PC-9 (cell line): ENCODE measurements at regions of chr7 and their contacts with region 1.

Region 1: DNA sequence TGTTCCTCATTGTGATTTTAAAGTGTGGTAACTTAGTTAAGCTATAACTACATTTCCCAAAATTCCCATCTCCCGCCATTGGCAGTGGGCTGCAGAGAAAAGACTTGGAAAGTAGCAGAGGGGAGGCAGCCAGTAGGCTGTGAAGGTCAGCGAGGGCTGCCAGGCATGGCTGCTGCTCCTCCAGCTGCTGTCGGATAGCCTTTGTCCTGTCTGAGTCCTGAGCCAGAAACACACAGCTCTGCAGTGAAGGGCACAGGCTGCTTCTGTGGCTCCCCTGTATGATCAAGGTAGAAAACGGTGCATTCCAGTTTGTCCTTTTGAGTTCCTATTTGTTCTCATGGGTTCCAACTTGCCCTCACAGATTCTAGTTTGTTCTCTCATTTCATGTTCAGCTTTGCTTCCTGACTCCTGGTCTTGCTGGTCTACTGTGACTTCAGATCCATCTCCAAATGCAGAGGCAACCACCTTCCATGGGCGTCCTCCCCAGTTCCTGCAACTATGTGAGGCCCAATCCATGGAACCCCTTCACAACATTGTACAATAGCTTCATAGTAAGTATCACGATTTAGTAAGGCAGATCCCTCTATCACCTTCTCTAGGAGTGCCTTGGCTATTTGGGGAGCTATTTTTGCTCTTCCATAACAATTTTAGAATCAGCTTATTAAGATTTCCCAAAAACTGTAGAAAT is 31.7 kb downstream of the SYPL1 start:
- DNase-seq: no peak
- H3K4me3 ChIP-seq: no peak overlapping the region
- H3K27ac ChIP-seq: no peak overlapping the region
- H3K4me1 ChIP-seq: 0 out of 2 replicates have a peak, but pooled peaks cover 3% of the 10 kb centered on the region
- H3K27me3 ChIP-seq: no peaks in the 10 kb centered on the region
- CTCF ChIP-seq: no peak

Region 2: DNA sequence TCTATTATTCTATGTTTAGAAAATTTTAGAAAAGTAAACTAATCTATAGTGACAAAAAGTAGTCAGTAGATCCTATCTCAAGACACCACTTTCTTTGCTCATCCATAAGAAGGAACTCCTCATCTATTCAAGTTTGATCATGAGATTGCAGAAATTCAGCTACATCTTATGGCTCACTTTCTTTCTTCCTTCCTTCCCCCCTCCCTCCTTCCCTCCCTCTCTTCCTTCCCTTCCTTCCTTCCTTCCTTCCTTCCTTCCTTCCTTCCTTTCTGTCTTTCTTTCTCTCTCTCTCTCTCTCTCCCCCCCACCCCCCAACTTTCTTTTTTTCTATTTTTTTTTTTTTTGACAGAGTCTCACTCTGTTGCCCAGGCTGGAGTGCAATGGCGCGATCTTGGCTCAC is 656.5 kb before region 1 on chr7:
- CTCF ChIA-PET with region 1: no interaction called
- POLR2A ChIA-PET with region 1: interaction called, 14 read pairs
- intact Hi-C with region 1: no loop called
- DNase-seq: no peak
- H3K4me3 ChIP-seq: no peak overlapping the region
- H3K27ac ChIP-seq: no peak overlapping the region
- H3K4me1 ChIP-seq: no peaks in the 10 kb centered on the region
- H3K27me3 ChIP-seq: no peaks in the 10 kb centered on the region
- CTCF ChIP-seq: no peak

Region 3: GRCh38 chr7:105906695-105907094 is 173.7 kb before region 1 on chr7:
- CTCF ChIA-PET with region 1: no interaction called
- POLR2A ChIA-PET with region 1: no interaction called
- intact Hi-C with region 1: no loop called
- DNase-seq: no peak
- H3K4me3 ChIP-seq: no peak overlapping the region
- H3K27ac ChIP-seq: no peak overlapping the region
- H3K4me1 ChIP-seq: no peaks in the 10 kb centered on the region
- H3K27me3 ChIP-seq: no peaks in the 10 kb centered on the region
- CTCF ChIP-seq: no peak

Region 4: DNA sequence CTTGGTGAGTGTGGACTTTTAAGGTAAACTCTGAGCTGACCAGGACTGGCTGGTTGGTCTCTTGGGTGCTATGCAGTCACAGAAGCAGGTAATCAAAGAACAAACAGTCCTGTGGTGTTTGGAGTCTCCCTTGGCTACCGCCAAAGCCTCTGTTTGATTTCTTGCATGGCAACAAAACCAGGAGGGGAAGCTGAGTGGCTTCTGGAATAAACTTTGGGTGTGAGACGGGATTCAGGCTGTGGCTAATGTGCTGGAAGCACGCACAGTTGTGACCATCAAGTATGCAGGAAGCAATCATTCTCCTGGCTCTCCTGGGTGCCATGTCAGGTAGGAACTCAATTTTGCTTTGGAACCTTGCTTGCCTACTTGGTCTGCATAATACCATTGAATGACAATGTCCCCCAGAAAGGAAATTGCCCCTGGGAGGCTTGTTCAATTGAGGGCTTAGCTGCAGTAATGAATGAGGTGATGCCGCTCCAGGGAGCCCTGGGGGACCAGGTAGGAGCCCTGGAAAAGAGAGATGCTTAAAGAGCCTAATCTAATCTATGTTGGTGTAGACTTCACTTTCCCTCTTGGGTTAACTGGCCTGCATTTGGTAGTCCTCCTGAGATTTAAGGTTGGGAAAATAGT is 117.3 kb before region 1 on chr7 and contains the start of gene CDHR3:
- CTCF ChIA-PET with region 1: interaction called, 12 read pairs
- POLR2A ChIA-PET with region 1: no interaction called
- intact Hi-C with region 1: no loop called
- DNase-seq: no peak
- H3K4me3 ChIP-seq: no peak within 1 kb of the TSS
- H3K27ac ChIP-seq: no peak within 1 kb of the TSS
- H3K4me1 ChIP-seq: no peaks in the 10 kb centered on the region
- H3K27me3 ChIP-seq: no peaks in the 10 kb centered on the region
- CTCF ChIP-seq: no peak
- total RNA-seq, gene CDHR3: 8.7 and 12.1 TPM in 2 replicates

Region 5: DNA sequence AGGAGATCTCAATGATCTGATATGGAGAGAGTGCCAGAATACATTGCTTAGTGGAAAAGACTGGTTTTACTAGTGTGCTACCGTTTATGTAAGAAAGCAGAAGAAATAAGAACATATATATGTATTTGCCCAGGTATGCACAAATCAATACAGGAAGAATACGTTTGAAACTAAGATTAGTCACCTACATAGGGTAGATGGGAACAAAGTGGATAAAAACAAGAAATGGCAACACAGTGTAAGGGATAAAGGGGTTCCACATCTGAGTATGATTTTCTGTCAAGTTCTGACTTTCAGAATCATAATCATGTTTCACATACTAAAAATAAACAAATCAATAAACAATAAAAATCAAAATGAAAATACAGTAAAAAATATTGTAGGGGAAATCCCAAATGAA is 352.9 kb after region 1 on chr7:
- CTCF ChIA-PET with region 1: no interaction called
- POLR2A ChIA-PET with region 1: no interaction called
- intact Hi-C with region 1: no loop called
- DNase-seq: no peak
- H3K4me3 ChIP-seq: no peak overlapping the region
- H3K27ac ChIP-seq: no peak overlapping the region
- H3K4me1 ChIP-seq: no peaks in the 10 kb centered on the region
- H3K27me3 ChIP-seq: no peaks in the 10 kb centered on the region
- CTCF ChIP-seq: no peak